Heart left ventricle (tissue), 16 donors: ENCODE measurements at regions of chrX and their contacts with region 1.

Region 1: GRCh38 chrX:34404386-34405070 is 252.6 kb downstream of the TMEM47 start:
- DNase-seq: peak in 2 of 5 donors; percentile 4 to 31
- ATAC-seq: peak in 3 of 4 donors; percentile 50 to 79 (median 73)
- H3K4me3 ChIP-seq: no peak overlapping the region
- H3K27ac ChIP-seq: no peak overlapping the region
- H3K4me1 ChIP-seq: no peaks in the 10 kb centered on the region
- H3K27me3 ChIP-seq: no peaks in the 10 kb centered on the region
- CTCF ChIP-seq: no peak
- POLR2A ChIP-seq: no peak

Region 2: GRCh38 chrX:34332334-34332733 is 72.2 kb before region 1 on chrX:
- intact Hi-C with region 1: loop called in 1 of 10 experiments (anchors 10 kb)
- DNase-seq: no peak
- ATAC-seq: no peak
- H3K4me3 ChIP-seq: no peak overlapping the region
- H3K27ac ChIP-seq: no peak overlapping the region
- H3K4me1 ChIP-seq: no peaks in the 10 kb centered on the region
- H3K27me3 ChIP-seq: no peaks in the 10 kb centered on the region
- CTCF ChIP-seq: peak in 4 of 12 donors; percentile 5 to 20 (median 8)
- POLR2A ChIP-seq: no peak

Region 3: GRCh38 chrX:34350561-34351335 is 53.8 kb before region 1 on chrX:
- intact Hi-C with region 1: no loop called
- DNase-seq: no peak
- ATAC-seq: no peak
- H3K4me3 ChIP-seq: no peak overlapping the region
- H3K27ac ChIP-seq: no peak overlapping the region
- H3K4me1 ChIP-seq: no peaks in the 10 kb centered on the region
- H3K27me3 ChIP-seq: no peaks in the 10 kb centered on the region
- CTCF ChIP-seq: no peak
- POLR2A ChIP-seq: no peak

Region 4: GRCh38 chrX:34365482-34365881 is 39.0 kb before region 1 on chrX:
- intact Hi-C with region 1: no loop called
- DNase-seq: no peak
- ATAC-seq: no peak
- H3K4me3 ChIP-seq: no peak overlapping the region
- H3K27ac ChIP-seq: no peak overlapping the region
- H3K4me1 ChIP-seq: no peaks in the 10 kb centered on the region
- H3K27me3 ChIP-seq: no peaks in the 10 kb centered on the region
- CTCF ChIP-seq: peak in 10 of 12 donors; percentile 12 to 48 (median 31)
- POLR2A ChIP-seq: no peak

Region 5: DNA sequence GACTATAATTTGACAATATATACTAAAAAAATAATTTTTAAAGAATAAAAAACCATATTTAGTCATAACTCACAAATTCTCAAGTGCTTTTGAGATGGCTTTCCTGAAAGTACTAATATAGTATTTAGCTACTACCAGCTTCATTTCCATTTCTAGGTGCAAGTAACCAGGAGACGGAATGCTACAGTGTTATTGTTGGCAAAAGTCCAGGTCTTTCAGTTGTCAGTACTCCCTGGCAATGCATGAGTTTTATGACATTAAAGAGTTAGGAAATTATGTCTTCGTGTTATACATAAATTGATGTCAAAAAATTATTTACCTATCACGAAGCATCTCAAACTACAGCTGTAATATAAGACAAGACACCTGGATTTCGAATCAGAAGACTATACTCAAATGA is 207.5 kb after region 1 on chrX:
- intact Hi-C with region 1: no loop called
- DNase-seq: peak in 1 of 5 donors; percentile 4
- ATAC-seq: no peak
- H3K4me3 ChIP-seq: no peak overlapping the region
- H3K27ac ChIP-seq: no peak overlapping the region
- H3K4me1 ChIP-seq: no peaks in the 10 kb centered on the region
- H3K27me3 ChIP-seq: no peaks in the 10 kb centered on the region
- CTCF ChIP-seq: no peak
- POLR2A ChIP-seq: no peak

Region 6: DNA sequence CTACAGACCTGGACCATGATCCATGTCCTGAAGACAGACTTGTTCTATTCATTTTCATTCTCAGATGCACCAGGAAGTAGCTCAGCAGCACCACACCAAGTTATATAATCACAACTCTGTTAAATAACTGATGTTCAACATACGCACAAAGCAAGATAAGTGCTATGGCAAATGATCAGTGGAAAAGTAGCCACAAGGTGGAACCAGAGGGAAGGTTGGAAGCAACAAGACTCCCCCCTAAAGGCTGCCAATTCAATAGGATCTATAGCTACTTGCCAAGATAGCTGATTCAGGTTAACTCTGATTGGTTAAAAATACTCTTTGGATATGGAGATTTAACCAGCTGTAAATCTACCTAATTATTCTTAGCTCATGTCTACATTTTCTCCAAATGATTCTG is 514.3 kb after region 1 on chrX:
- intact Hi-C with region 1: no loop called
- DNase-seq: no peak
- ATAC-seq: no peak
- H3K4me3 ChIP-seq: no peak overlapping the region
- H3K27ac ChIP-seq: no peak overlapping the region
- H3K4me1 ChIP-seq: no peaks in the 10 kb centered on the region
- H3K27me3 ChIP-seq: no peaks in the 10 kb centered on the region
- CTCF ChIP-seq: peak in 8 of 12 donors; percentile 6 to 50 (median 36)
- POLR2A ChIP-seq: no peak